ENCODE measurements at regions of chr10 and their contacts with region 1.

Region 1: DNA sequence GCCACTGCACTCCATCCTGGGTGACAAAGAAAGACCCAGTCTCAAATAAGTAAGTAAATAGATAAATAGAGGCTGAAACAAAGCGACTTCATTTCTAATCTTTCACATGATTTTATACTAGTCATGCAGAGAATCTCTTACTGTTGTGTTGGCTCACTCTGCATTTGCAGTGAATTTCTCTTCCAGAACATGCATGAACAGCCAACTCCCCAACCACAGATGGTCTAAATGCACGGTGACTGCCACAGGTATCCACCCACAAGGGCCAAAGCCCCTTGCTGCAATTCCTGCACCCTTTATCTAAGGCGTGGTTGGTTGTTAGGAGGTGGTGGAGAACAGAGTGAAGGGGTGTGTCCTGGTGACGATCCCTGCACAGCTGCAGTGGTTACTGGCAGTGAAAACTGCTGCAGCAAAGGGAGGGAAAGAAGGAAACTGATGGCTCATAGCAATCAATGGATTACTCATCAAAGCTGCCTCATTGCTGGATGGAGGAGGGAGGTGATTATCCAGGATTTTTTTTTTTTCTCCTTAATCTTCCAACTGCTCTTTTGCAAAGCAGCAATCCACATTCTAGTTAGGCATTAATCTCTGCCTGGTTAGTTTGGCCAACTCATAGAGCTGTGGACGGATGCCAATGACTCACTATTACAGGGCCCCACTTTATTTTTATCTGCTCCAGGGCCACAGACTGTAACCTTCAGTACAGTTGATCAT is 50.6 kb downstream of the PRTFDC1 start:
- DNase-seq: peak; percentile 93
- H3K4me3 Mint-ChIP-seq: no peak overlapping the region
- H3K27ac Mint-ChIP-seq: no peak overlapping the region
- H3K4me1 Mint-ChIP-seq: peaks cover 18% of the 10 kb centered on the region
- H3K27me3 Mint-ChIP-seq: no peaks in the 10 kb centered on the region
- CTCF ChIP-seq: no peak

Region 2: DNA sequence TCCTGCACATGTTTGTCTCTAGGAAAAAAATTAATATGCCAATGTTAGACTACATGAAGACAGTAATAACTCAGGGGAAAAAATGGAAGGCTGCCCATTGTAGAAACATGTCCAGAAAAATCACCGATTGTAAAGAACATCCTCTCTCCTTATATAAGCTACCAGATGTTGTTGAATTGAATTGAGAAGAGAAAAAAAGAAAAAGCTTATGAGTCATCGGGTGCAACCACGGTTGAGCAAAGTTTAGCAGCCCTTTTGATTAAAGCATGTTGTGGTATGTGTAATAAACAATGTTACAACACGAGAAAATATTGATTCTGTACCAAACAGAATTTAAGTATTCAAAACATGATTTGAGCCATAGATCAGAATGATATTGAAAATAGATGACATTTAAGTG is 75.8 kb before region 1 on chr10:
- CTCF ChIA-PET with region 1: no interaction called
- POLR2A ChIA-PET with region 1: interaction called, 4 read pairs
- intact Hi-C with region 1: loop called (anchors 5 kb)
- DNase-seq: peak; percentile 72
- H3K4me3 Mint-ChIP-seq: peak overlapping the region; percentile 53
- H3K27ac Mint-ChIP-seq: no peak overlapping the region
- H3K4me1 Mint-ChIP-seq: peaks cover 33% of the 10 kb centered on the region
- H3K27me3 Mint-ChIP-seq: no peaks in the 10 kb centered on the region
- CTCF ChIP-seq: no peak

Region 3: DNA sequence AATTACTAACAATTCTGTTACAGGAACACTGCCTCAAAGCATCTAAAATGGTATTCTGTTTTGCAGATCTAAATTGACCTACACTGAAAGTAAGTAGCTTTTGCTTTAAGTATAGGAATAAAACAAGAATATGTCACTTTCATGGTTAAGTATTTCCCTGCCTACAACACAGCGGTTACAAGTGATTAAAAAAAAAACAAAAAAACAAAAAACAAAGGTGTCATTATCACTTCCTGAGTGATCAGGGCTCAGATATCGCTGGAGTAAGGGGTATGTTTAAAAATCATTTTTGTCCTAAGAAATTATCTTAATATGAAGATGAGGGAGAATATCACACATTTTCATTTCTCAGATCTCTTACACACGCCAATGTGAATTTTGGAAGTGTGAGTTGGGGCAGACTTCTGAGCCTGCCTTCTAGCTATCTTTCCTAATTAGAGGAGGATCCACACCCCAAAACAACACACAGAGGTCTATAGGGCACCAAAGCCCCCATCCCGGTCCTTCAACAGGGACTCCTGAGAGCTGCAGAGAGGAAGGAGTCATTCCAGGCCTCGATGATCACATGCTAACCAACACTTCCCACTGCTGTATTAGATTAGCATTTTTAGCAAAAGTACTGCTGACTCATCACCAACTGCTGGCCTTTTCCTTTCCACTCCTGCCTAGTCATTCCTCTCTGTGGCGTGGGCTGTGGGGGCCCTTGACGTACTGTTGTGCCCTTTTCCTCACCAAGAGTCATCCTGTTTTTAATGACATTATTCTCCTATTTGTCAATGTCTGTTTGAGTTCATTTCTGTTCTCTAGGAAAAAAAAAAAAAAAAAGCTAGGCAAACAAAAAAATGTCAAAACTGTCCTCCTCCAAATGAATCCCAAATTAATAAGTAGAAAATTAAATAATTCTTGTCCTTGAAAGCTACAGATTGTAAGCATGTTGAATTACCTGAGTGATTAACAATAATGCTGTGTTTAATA is 19.4 kb after region 1 on chr10:
- CTCF ChIA-PET with region 1: no interaction called
- POLR2A ChIA-PET with region 1: no interaction called
- intact Hi-C with region 1: no loop called
- DNase-seq: peak; percentile 58
- H3K4me3 Mint-ChIP-seq: no peak overlapping the region
- H3K27ac Mint-ChIP-seq: peak overlapping the region; percentile 70
- H3K4me1 Mint-ChIP-seq: peaks cover 10% of the 10 kb centered on the region
- H3K27me3 Mint-ChIP-seq: no peaks in the 10 kb centered on the region
- CTCF ChIP-seq: no peak

Region 4: GRCh38 chr10:24944512-24945255 is 42.8 kb after region 1 on chr10:
- CTCF ChIA-PET with region 1: interaction called, 4 read pairs
- POLR2A ChIA-PET with region 1: no interaction called
- intact Hi-C with region 1: loop called (anchors 2 kb)
- DNase-seq: peak; percentile 90
- H3K4me3 Mint-ChIP-seq: no peak overlapping the region
- H3K27ac Mint-ChIP-seq: no peak overlapping the region
- H3K4me1 Mint-ChIP-seq: peaks cover 7% of the 10 kb centered on the region
- H3K27me3 Mint-ChIP-seq: no peaks in the 10 kb centered on the region
- CTCF ChIP-seq: peak; percentile 42

Region 5: DNA sequence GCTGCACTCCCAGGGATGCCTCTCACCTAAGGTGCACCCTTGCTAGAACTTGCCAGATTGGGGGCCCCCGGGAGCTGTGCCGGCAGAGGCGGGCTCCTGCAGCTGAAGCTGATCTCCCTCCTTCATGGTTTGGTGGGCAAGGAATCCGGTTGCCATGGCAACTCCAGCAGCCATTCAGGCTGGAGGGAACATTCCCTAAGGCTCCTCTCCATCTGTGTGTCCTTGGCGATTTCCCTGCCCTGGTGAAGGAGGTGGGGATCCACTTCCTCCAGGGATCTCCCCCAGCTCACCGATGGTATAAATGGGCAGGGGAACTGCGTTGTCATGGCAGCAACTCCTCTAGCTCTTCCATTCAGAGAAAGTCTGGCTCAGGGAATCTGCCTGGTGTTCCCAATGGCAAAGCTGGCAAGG is 223.4 kb after region 1 on chr10:
- CTCF ChIA-PET with region 1: no interaction called
- POLR2A ChIA-PET with region 1: no interaction called
- intact Hi-C with region 1: no loop called
- DNase-seq: no peak
- H3K4me3 Mint-ChIP-seq: no peak overlapping the region
- H3K27ac Mint-ChIP-seq: no peak overlapping the region
- H3K4me1 Mint-ChIP-seq: no peaks in the 10 kb centered on the region
- H3K27me3 Mint-ChIP-seq: peaks cover 6% of the 10 kb centered on the region
- CTCF ChIP-seq: no peak